Cardiac septum (tissue), 1 donor: ENCODE measurements at regions of chr1 and their contacts with region 1.

Region 1: DNA sequence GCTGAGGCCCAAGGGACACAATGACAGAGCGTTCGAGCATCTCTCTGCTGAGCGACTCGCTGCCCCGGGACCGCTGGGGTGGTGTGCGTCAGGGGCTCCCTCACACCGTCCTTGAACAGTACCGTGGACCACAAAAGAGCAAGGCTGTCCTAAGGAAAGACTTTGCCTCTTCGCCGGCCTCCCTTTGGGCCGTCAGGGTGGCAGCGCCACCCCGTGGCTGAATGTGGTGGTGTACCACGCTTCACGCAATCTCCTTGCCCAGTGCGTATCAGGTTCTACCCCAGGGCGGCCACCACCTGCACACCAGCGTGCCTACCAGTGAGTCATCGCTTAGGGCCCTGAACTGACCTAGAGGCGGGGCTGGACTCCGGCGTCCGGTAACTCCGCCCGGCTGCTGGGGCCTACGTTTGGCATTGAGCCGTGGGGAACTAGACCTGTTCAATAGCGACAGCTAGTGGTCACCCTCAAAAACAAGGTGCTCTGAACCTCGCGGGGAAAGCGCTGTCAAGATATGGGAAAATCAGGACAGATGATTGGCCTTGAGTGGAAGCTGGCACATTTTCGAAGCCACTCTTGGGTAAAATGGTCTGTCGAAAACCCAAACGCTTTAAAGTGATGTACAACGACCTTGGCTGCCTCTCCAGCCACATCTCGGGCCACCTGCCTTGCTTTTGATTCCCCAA is 8.1 kb upstream of the TRAF3IP3 start:
- DNase-seq: peak; percentile 98

Region 2: GRCh38 chr1:209542585-209542984 is 205.1 kb before region 1 on chr1:
- intact Hi-C with region 1: no loop called
- DNase-seq: no peak

Region 3: GRCh38 chr1:209601809-209602657 is 145.7 kb before region 1 on chr1:
- intact Hi-C with region 1: loop called (anchors 2 kb)
- DNase-seq: no peak

Region 4: GRCh38 chr1:209643285-209644020 is 104.3 kb before region 1 on chr1:
- intact Hi-C with region 1: loop called (anchors 2 kb)
- DNase-seq: peak; percentile 88

Region 5: DNA sequence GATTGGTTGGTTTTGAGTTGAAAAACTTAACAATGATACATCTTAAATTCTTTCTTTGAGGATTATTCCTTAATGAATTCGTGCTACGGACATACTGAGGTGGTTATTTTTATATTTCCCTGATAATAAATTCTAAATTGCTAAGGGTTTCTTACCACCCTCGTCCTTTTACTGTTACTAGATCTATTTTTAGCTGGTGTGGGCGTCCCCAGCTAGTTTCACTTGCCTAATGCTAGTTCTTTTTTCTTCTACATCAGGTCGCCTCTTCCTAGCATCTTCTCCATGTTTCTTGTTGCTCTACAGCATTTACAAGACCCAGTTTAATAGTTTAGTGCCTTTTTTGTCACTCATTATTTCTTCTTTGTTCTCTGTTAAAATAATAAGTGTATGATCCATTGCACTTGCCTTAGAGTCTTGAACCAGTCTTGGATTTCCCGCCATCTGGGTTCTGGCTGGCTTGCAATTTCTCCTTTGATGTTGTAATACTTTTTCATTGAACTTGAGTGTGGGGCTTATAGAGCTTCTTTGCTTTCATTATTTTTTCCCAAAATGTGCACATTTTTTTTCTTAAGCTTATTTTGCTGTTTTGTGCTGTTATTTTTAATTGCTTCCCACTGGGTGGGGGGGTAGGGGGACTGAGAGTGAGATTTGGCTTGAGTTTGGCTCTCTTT is 43.8 kb before region 1 on chr1:
- intact Hi-C with region 1: loop called (anchors 2 kb)
- DNase-seq: no peak